ENCODE measurements at regions of chr12 and their contacts with region 1.

Region 1: DNA sequence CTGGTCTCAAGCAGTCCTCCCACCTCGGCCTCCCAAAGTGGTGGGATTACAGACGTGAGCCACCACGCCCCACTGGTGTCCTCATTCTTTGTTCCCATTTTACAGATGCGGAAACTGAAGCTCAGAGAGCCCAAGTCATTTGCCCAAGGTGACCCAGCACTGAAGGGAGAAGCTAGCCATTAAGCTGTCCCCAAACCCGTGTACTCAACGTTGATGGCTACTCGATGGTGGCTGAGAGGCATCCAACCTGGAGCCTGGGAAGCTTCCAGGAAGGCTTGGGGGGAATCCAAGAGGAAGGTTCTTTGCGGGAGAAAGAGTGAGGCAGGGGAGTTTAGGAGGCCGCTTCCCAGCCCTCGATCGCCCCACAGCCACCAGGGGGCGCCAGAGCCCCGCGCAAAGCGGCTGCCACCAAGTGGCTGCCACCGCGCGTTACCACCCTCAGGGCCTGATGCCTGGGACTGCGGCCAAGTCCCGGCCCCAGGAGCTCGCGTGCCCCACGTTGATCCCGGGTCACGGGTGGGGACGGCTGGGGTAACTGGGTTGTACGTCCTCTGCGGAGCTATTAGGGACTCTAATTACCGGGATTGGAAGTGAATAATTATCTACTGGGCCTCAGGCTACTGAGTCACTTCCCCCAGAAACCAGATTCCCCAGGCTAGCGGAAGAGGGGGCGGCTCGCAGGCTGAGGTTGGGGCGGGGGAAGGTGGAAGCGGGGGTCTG is 8.8 kb upstream of the SH2B3 start:
- DNase-seq: peak; percentile 80 to 88 (median 83)
- H3K4me3 ChIP-seq: no peak overlapping the region
- H3K4me3 Mint-ChIP-seq: peak overlapping the region in 7 of 8 donors; percentile 17 to 64 (median 49)
- H3K27ac ChIP-seq: no peak overlapping the region
- H3K27ac Mint-ChIP-seq: peak overlapping the region in 6 of 7 donors; percentile 52 to 78 (median 69)
- H3K4me1 ChIP-seq: no peaks in the 10 kb centered on the region
- H3K4me1 Mint-ChIP-seq: peaks cover 5 to 21% (median 10%) of the 10 kb centered on the region in 4 donors
- H3K27me3 ChIP-seq: no peaks in the 10 kb centered on the region
- H3K27me3 Mint-ChIP-seq: no peaks in the 10 kb centered on the region

Region 2: DNA sequence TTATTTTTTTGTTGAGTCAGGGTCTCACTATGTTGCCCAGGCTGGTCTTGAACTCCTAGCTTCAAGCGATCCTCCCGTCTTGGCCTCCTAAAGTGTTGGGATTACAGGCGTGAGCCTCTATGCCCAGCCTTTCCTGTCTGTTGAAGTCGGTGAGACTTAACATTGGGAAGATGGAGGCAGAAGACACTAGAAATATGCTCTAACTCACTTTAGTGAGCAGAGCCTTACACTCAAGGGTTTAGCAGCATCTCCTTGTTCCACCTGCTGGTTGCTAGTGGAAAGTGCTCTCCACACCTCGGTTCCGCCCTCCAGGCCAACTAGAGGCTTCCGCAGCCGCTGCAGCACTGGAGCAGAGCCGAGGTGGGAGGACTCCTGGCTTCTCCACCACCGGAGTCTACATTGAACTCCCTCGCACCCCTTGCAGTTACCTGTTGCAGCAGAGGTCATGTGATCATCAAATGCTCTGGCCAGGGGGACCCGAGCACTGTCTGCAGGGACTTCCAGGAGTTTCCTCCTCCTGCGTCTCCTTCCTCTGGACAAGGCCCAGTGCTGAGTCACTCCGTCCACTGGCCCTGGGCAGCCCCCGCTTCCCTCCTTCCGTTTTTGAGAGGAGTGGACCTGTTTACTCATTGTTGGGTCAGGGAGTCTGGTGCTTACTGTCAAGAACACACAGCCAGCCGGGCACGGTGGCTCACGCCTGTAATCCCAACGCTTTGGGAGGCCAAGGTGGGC is 698.5 kb before region 1 on chr12:
- CTCF ChIA-PET with region 1: no interaction called
- POLR2A ChIA-PET with region 1: no interaction called
- intact Hi-C with region 1: no loop called
- DNase-seq: peak; percentile 75 to 80 (median 78)
- H3K4me3 ChIP-seq: no peak overlapping the region
- H3K4me3 Mint-ChIP-seq: peak overlapping the region in 2 of 8 donors; percentile 46 to 48
- H3K27ac ChIP-seq: no peak overlapping the region
- H3K27ac Mint-ChIP-seq: peak overlapping the region in 4 of 7 donors; percentile 45 to 90 (median 64)
- H3K4me1 ChIP-seq: peaks cover 9% of the 10 kb centered on the region
- H3K4me1 Mint-ChIP-seq: peaks cover 4 to 11% (median 6%) of the 10 kb centered on the region in 4 donors
- H3K27me3 ChIP-seq: no peaks in the 10 kb centered on the region
- H3K27me3 Mint-ChIP-seq: no peaks in the 10 kb centered on the region

Region 3: DNA sequence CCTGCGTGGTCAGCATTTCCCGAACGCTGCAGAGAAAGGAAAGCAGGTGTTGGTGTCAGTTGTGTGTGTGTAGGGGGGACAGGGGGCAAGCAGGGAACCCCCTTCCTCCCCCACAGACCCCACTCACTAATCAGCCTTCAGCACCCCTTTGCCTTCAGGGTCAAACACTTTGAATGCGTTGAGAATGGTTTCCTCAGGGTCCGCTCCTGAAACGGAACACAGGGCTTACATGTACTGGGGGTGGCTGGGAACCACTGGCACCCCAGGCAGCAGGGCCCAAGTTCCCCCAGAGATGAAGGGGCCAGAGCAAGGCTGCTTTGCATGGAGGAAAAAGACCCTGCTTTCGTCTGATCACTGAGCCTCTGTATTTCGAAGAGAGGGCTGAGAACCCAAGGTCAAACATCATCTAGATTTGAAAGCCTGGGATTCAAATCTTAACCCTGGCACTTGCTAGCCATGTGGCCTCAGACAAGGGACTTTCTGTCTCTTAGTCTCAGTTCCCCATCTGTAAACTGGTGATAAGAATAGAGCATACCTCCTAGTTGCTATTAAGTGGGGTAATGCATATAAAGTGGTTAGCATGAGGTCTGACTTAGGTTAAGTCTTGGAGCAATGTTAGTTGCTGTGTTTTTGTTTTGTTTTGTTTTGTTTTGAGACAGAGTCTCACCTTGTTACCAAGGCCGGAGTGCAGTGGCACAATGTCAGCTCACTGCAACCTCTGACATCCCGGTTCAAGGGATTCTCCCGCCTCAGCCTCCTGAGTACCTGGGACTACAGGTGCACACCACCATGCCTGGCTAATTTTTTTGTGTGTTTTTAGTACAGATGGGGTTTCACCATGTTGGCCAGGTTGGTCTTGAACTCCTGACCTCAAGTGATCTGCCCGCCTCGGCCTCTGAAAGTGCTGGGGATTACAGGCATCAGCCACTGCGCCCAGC is 483.5 kb before region 1 on chr12:
- CTCF ChIA-PET with region 1: no interaction called
- POLR2A ChIA-PET with region 1: no interaction called
- intact Hi-C with region 1: no loop called
- DNase-seq: no peak
- H3K4me3 ChIP-seq: no peak overlapping the region
- H3K4me3 Mint-ChIP-seq: no peak overlapping the region
- H3K27ac ChIP-seq: no peak overlapping the region
- H3K27ac Mint-ChIP-seq: no peak overlapping the region
- H3K4me1 ChIP-seq: no peaks in the 10 kb centered on the region
- H3K4me1 Mint-ChIP-seq: no peaks in the 10 kb centered on the region
- H3K27me3 ChIP-seq: no peaks in the 10 kb centered on the region
- H3K27me3 Mint-ChIP-seq: peaks cover 7 to 8% of the 10 kb centered on the region in 2 donors

Region 4: GRCh38 chr12:111352296-111352993 is 44.4 kb before region 1 on chr12:
- CTCF ChIA-PET with region 1: no interaction called
- POLR2A ChIA-PET with region 1: no interaction called
- intact Hi-C with region 1: no loop called
- DNase-seq: no peak
- H3K4me3 ChIP-seq: no peak overlapping the region
- H3K4me3 Mint-ChIP-seq: no peak overlapping the region
- H3K27ac ChIP-seq: no peak overlapping the region
- H3K27ac Mint-ChIP-seq: no peak overlapping the region
- H3K4me1 ChIP-seq: no peaks in the 10 kb centered on the region
- H3K4me1 Mint-ChIP-seq: no peaks in the 10 kb centered on the region
- H3K27me3 ChIP-seq: no peaks in the 10 kb centered on the region
- H3K27me3 Mint-ChIP-seq: no peaks in the 10 kb centered on the region

Region 5: GRCh38 chr12:111386885-111387284 is 10.0 kb before region 1 on chr12:
- CTCF ChIA-PET with region 1: interaction called, 17 read pairs
- POLR2A ChIA-PET with region 1: no interaction called
- intact Hi-C with region 1: no loop called
- DNase-seq: no peak
- H3K4me3 ChIP-seq: no peak overlapping the region
- H3K4me3 Mint-ChIP-seq: no peak overlapping the region
- H3K27ac ChIP-seq: no peak overlapping the region
- H3K27ac Mint-ChIP-seq: no peak overlapping the region
- H3K4me1 ChIP-seq: no peaks in the 10 kb centered on the region
- H3K4me1 Mint-ChIP-seq: peaks cover 0 to 4% (median 0%) of the 10 kb centered on the region in 4 donors
- H3K27me3 ChIP-seq: no peaks in the 10 kb centered on the region
- H3K27me3 Mint-ChIP-seq: no peaks in the 10 kb centered on the region

Region 6: DNA sequence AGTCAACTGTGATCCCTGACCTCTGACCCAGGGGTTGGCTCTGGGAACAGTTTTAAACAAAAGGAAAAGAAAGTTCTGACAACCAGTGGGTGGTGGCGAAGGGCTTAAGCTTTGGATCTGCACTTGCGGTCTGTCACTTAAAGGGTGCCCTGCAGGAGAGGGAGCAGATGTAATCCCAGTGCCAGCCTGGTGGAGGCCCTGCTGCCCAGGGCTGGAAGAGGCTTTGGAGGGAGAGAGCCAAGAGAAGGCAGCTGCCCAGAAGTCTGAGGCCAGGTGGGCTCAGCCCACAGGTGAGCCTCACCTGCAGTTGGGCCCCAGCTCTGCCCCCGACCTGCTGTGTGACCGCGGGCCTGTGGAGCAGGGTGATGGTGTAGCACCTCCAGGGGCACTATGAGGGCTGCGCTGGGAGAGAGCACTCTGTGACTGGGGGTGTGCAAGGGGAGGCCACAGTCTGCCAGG is 27.9 kb after region 1 on chr12:
- CTCF ChIA-PET with region 1: interaction called, 12 read pairs
- POLR2A ChIA-PET with region 1: no interaction called
- intact Hi-C with region 1: no loop called
- DNase-seq: no peak
- H3K4me3 ChIP-seq: no peak overlapping the region
- H3K4me3 Mint-ChIP-seq: peak overlapping the region; percentile 15 to 82 (median 46)
- H3K27ac ChIP-seq: peak overlapping the region; percentile 98
- H3K27ac Mint-ChIP-seq: peak overlapping the region; percentile 77 to 100 (median 96)
- H3K4me1 ChIP-seq: peaks cover 59% of the 10 kb centered on the region
- H3K4me1 Mint-ChIP-seq: peaks cover 40 to 81% (median 60%) of the 10 kb centered on the region in 4 donors
- H3K27me3 ChIP-seq: no peaks in the 10 kb centered on the region
- H3K27me3 Mint-ChIP-seq: no peaks in the 10 kb centered on the region

Region 7: DNA sequence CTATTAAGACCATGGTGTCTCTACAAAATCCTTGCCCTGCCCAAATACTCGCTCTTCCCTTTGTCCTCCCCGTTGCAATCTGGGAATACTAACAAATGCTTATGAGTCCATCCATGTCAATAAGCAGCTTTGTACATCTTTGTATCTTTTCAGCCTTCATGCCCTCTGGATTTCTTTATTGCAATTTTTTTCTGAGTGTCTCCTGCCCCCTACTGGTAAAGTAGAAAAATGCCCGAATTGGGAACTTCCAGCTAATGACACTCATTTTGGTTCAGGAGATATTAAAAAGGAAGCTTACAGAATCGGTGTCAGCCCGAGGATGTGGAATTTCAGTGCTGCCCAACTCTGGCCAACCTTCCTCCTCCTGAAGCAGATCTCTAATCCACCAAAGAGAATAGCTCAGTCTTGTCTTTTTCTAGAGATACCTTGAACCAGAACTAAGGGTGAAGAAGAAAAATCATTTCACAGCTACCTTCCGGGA is 54.8 kb after region 1 on chr12:
- CTCF ChIA-PET with region 1: interaction called, 1,282 read pairs
- POLR2A ChIA-PET with region 1: interaction called, 683 read pairs
- intact Hi-C with region 1: loop called (anchors 1 kb)
- DNase-seq: peak; percentile 45 to 77 (median 76)
- H3K4me3 ChIP-seq: no peak overlapping the region
- H3K4me3 Mint-ChIP-seq: peak overlapping the region in 1 of 8 donors; percentile 35
- H3K27ac ChIP-seq: peak overlapping the region; percentile 19
- H3K27ac Mint-ChIP-seq: peak overlapping the region; percentile 4 to 87 (median 71)
- H3K4me1 ChIP-seq: peaks cover 39% of the 10 kb centered on the region
- H3K4me1 Mint-ChIP-seq: peaks cover 20 to 60% (median 41%) of the 10 kb centered on the region in 4 donors
- H3K27me3 ChIP-seq: no peaks in the 10 kb centered on the region
- H3K27me3 Mint-ChIP-seq: no peaks in the 10 kb centered on the region

Region 8: GRCh38 chr12:111482462-111482861 is 85.6 kb after region 1 on chr12:
- CTCF ChIA-PET with region 1: interaction called, 31 read pairs
- POLR2A ChIA-PET with region 1: no interaction called
- intact Hi-C with region 1: loop called (anchors 1 kb)
- DNase-seq: peak in 2 of 5 donors; percentile 2 to 11
- H3K4me3 ChIP-seq: no peak overlapping the region
- H3K4me3 Mint-ChIP-seq: no peak overlapping the region
- H3K27ac ChIP-seq: no peak overlapping the region
- H3K27ac Mint-ChIP-seq: peak overlapping the region in 2 of 7 donors; percentile 32 to 59
- H3K4me1 ChIP-seq: no peaks in the 10 kb centered on the region
- H3K4me1 Mint-ChIP-seq: no peaks in the 10 kb centered on the region
- H3K27me3 ChIP-seq: no peaks in the 10 kb centered on the region
- H3K27me3 Mint-ChIP-seq: no peaks in the 10 kb centered on the region

Region 9: DNA sequence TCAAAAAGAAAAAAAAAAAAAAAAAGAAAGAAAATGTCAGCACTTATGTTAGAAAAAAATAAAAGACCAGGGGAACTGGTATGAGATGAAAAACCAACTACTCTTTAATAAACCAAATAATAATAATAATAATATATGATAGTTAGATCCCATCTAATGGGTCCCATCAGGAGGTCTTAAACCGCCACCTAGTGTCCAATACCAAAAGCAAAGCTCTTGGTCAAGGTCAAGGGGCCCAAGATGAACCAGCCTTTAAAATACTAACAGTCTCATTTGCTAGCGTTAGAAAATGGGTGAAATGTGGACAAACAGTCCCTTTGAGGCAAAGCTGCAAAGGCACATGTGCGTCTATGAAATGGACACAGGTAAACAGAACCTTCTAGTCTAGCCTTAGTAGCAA is 276.6 kb after region 1 on chr12:
- CTCF ChIA-PET with region 1: interaction called, 9 read pairs
- POLR2A ChIA-PET with region 1: no interaction called
- intact Hi-C with region 1: loop called (anchors 2 kb)
- DNase-seq: no peak
- H3K4me3 ChIP-seq: no peak overlapping the region
- H3K4me3 Mint-ChIP-seq: no peak overlapping the region
- H3K27ac ChIP-seq: no peak overlapping the region
- H3K27ac Mint-ChIP-seq: no peak overlapping the region
- H3K4me1 ChIP-seq: no peaks in the 10 kb centered on the region
- H3K4me1 Mint-ChIP-seq: peaks cover 0 to 2% (median 0%) of the 10 kb centered on the region in 4 donors
- H3K27me3 ChIP-seq: no peaks in the 10 kb centered on the region
- H3K27me3 Mint-ChIP-seq: no peaks in the 10 kb centered on the region

Measured in CD4-positive, alpha-beta memory T cell (primary cell).